Activated CD4-positive, alpha-beta T cell treated with anti-CD3 and anti-CD28 coated beads, Interleukin-2, amount 10 ng/mL, durations not matched to agents 24 days and 14 days (primary cell): ENCODE measurements at regions of chr20 and their contacts with region 1.

Region 1: GRCh38 chr20:23420943-23421931 is at the start of gene NAPB:
- DNase-seq: peak; percentile 98
- H3K4me3 Mint-ChIP-seq: peak within 1 kb of the TSS; percentile 98
- H3K27ac Mint-ChIP-seq: peak within 1 kb of the TSS; percentile 94
- H3K4me1 Mint-ChIP-seq: peaks cover 49% of the 10 kb centered on the region
- H3K27me3 Mint-ChIP-seq: peaks cover 7% of the 10 kb centered on the region
- total RNA-seq, gene NAPB: 13.6 and 14.2 TPM in 2 replicates

Region 2: GRCh38 chr20:23350196-23350903 is 70.9 kb before region 1 on chr20 and contains the start of gene NXT1:
- intact Hi-C with region 1: loop called (anchors 1 kb)
- DNase-seq: peak; percentile 99
- H3K4me3 Mint-ChIP-seq: peak within 1 kb of the TSS; percentile 88
- H3K27ac Mint-ChIP-seq: peak within 1 kb of the TSS; percentile 100
- H3K4me1 Mint-ChIP-seq: peaks cover 30% of the 10 kb centered on the region
- H3K27me3 Mint-ChIP-seq: no peaks in the 10 kb centered on the region
- total RNA-seq, gene NXT1: 57.0 and 59.9 TPM in 2 replicates

Region 3: GRCh38 chr20:23361598-23362384 is 59.4 kb before region 1 on chr20 and contains the start of gene GZF1:
- intact Hi-C with region 1: loop called (anchors 1 kb)
- DNase-seq: peak; percentile 100
- H3K4me3 Mint-ChIP-seq: peak within 1 kb of the TSS; percentile 92
- H3K27ac Mint-ChIP-seq: peak within 1 kb of the TSS; percentile 94
- H3K4me1 Mint-ChIP-seq: peaks cover 53% of the 10 kb centered on the region
- H3K27me3 Mint-ChIP-seq: peaks cover 2% of the 10 kb centered on the region
- total RNA-seq, gene GZF1: 10.3 and 14.7 TPM in 2 replicates

Region 4: GRCh38 chr20:23407781-23408464 is 13.3 kb before region 1 on chr20:
- intact Hi-C with region 1: loop called (anchors 1 kb)
- DNase-seq: peak; percentile 87
- H3K4me3 Mint-ChIP-seq: peak overlapping the region; percentile 61
- H3K27ac Mint-ChIP-seq: peak overlapping the region; percentile 77
- H3K4me1 Mint-ChIP-seq: peaks cover 51% of the 10 kb centered on the region
- H3K27me3 Mint-ChIP-seq: no peaks in the 10 kb centered on the region

Region 5: GRCh38 chr20:23520185-23520584 is 98.9 kb after region 1 on chr20:
- intact Hi-C with region 1: no loop called
- DNase-seq: no peak
- H3K4me3 Mint-ChIP-seq: no peak overlapping the region
- H3K27ac Mint-ChIP-seq: no peak overlapping the region
- H3K4me1 Mint-ChIP-seq: no peaks in the 10 kb centered on the region
- H3K27me3 Mint-ChIP-seq: no peaks in the 10 kb centered on the region